ENCODE measurements at regions of chr2 and their contacts with region 1.

Region 1: DNA sequence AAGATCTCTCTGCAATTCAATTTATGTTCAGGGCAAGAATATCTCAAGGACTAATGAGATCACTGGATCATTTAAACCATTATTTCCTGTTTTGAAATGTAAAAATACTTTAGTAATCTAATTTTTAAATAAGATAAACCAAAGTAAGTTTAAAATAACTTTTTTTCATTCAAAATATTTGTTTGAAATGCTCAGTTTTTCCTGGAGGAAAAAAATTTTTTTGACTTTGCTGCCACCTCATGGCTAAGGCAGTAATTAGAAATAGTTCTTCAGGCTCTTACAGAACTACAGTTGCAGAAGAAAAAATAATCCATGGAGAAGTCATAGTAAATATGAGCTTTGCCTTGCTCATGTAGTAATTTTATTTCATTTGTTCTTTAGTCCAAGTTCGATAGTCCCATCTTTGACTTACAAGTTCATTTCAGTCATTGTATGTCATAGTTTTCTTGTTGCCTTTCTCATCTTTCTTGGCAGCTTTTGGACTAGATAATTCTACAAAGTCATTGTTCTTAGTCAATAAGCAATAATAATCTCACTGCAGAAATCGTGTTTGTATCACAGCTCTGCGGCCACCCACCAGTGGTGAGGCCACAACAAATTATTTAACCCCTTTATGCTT is 127.4 kb downstream of the DPP4 start:
- DNase-seq: peak in 1 of 2 experiments; percentile 28
- H3K4me3 ChIP-seq: no peak overlapping the region
- H3K4me3 Mint-ChIP-seq: no peak overlapping the region
- H3K27ac Mint-ChIP-seq: no peak overlapping the region
- H3K4me1 ChIP-seq: no peaks in the 10 kb centered on the region
- H3K4me1 Mint-ChIP-seq: no peaks in the 10 kb centered on the region
- H3K27me3 ChIP-seq: no peaks in the 10 kb centered on the region; the same call in 1 of the 2 replicates
- H3K27me3 Mint-ChIP-seq: peaks cover 4% of the 10 kb centered on the region
- CTCF ChIP-seq: peak; percentile 56 to 67

Region 2: DNA sequence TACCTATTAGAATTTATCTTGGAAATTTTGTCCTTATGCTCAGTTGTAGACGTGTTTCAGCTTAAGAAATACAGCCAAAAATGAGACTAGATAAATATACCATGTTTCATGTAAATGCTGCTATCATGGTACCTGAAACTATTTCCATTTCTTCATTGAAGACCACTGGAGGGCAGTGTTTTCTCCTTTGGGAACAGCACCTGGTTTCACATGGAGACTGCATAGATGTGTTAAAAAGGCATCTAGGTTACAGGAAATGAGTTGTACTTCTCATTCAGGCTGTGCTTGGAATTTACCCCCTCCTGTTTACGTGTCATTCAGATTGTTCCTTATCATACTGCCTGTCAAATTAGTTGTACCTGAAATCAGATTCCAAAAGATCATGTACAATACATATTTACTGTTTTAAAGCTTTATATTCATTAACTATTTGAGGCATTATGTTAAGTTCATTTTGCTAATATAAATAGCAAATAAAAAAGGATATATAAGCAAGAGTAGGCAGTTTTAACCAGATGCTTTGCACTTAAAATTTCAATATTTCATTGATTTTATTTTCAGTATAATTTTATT is 695.6 kb before region 1 on chr2:
- CTCF ChIA-PET with region 1: no interaction called
- POLR2A ChIA-PET with region 1: no interaction called
- intact Hi-C with region 1: loop called (anchors 2 kb)
- DNase-seq: peak in 1 of 2 experiments; percentile 68
- H3K4me3 ChIP-seq: no peak overlapping the region
- H3K4me3 Mint-ChIP-seq: no peak overlapping the region
- H3K27ac Mint-ChIP-seq: no peak overlapping the region
- H3K4me1 ChIP-seq: no peaks in the 10 kb centered on the region
- H3K4me1 Mint-ChIP-seq: no peaks in the 10 kb centered on the region
- H3K27me3 ChIP-seq: no peaks in the 10 kb centered on the region
- H3K27me3 Mint-ChIP-seq: no peaks in the 10 kb centered on the region
- CTCF ChIP-seq: peak; percentile 63 to 77

Region 3: GRCh38 chr2:161586517-161587167 is 360.0 kb before region 1 on chr2:
- CTCF ChIA-PET with region 1: interaction called, 4 read pairs
- POLR2A ChIA-PET with region 1: no interaction called
- intact Hi-C with region 1: loop called (anchors 1 kb)
- DNase-seq: no peak
- H3K4me3 ChIP-seq: no peak overlapping the region
- H3K4me3 Mint-ChIP-seq: no peak overlapping the region
- H3K27ac Mint-ChIP-seq: no peak overlapping the region
- H3K4me1 ChIP-seq: no peaks in the 10 kb centered on the region
- H3K4me1 Mint-ChIP-seq: no peaks in the 10 kb centered on the region
- H3K27me3 ChIP-seq: no peaks in the 10 kb centered on the region
- H3K27me3 Mint-ChIP-seq: peaks cover 7% of the 10 kb centered on the region
- CTCF ChIP-seq: peak; percentile 54 to 66

Region 4: GRCh38 chr2:161604901-161605300 is 341.7 kb before region 1 on chr2:
- CTCF ChIA-PET with region 1: no interaction called
- POLR2A ChIA-PET with region 1: no interaction called
- intact Hi-C with region 1: loop called (anchors 5 kb)
- DNase-seq: no peak
- H3K4me3 ChIP-seq: no peak overlapping the region
- H3K4me3 Mint-ChIP-seq: no peak overlapping the region
- H3K27ac Mint-ChIP-seq: no peak overlapping the region
- H3K4me1 ChIP-seq: no peaks in the 10 kb centered on the region
- H3K4me1 Mint-ChIP-seq: no peaks in the 10 kb centered on the region
- H3K27me3 ChIP-seq: no peaks in the 10 kb centered on the region
- H3K27me3 Mint-ChIP-seq: no peaks in the 10 kb centered on the region
- CTCF ChIP-seq: no peak

Region 5: GRCh38 chr2:161808564-161808963 is 138.0 kb before region 1 on chr2:
- CTCF ChIA-PET with region 1: no interaction called
- POLR2A ChIA-PET with region 1: no interaction called
- intact Hi-C with region 1: loop called (anchors 10 kb)
- DNase-seq: no peak
- H3K4me3 ChIP-seq: no peak overlapping the region
- H3K4me3 Mint-ChIP-seq: no peak overlapping the region
- H3K27ac Mint-ChIP-seq: no peak overlapping the region
- H3K4me1 ChIP-seq: no peaks in the 10 kb centered on the region
- H3K4me1 Mint-ChIP-seq: no peaks in the 10 kb centered on the region
- H3K27me3 ChIP-seq: no peaks in the 10 kb centered on the region
- H3K27me3 Mint-ChIP-seq: no peaks in the 10 kb centered on the region
- CTCF ChIP-seq: no peak

Measured in Caco-2 (cell line).